ENCODE measurements at regions of chr11 and their contacts with region 1.

Region 1: GRCh38 chr11:65569973-65570918 is at the start of gene ZNRD2:
- DNase-seq: peak; percentile 99
- H3K4me3 ChIP-seq: peak within 1 kb of the TSS; percentile 60 to 97 (median 91)
- H3K27ac ChIP-seq: peak within 1 kb of the TSS; percentile 81
- H3K4me1 ChIP-seq: peaks cover 56% of the 10 kb centered on the region
- H3K27me3 ChIP-seq: no peaks in the 10 kb centered on the region
- CTCF ChIP-seq: peak; percentile 47 to 48
- total RNA-seq, gene ZNRD2: 35.2 to 52.8 TPM

Region 2: DNA sequence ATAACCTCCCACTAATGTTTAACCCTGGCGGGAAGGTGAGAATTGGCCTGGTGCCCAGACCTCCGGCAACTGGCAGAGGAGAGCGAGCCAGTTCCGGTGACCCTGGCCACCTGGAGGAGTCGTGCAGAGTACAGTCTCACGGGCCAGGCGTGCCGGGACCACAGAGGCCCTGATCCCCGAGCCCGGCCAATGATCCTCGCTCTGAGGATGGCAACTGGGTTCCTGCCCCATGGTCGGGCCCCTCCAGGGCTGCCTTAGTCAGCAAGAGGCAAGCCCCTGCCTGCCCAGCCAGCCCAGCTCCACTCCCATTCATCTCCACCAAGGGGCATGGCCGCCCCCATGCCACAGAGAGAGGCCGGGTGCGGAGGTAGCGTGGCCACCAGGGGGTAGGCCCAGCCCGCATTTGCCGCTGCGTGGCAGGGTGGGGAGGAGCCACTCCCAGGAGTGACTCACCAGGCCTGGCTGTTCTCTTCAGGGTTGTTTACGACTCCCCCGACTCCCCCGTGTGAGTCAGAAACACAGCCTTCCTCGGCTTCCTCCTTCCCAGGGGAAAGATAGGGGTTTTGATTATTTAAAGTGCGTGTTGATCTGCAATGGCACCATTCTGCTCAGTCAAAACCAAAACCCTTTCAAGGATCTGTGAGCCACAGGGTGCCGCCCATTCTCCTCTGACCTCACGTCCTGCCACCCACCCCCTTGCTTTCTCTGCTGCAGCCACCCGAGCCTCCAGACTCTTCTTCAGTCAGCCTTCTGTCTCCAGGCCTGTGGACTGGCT is 188.0 kb before region 1 on chr11 and contains the start of gene SLC25A45:
- CTCF ChIA-PET with region 1: no interaction called
- dilution Hi-C with region 1: no loop called
- in situ Hi-C with region 1: no loop called
- intact Hi-C with region 1: loop called (anchors 1 kb)
- DNase-seq: peak; percentile 100
- H3K4me3 ChIP-seq: peak within 1 kb of the TSS; percentile 17 to 31 (median 22)
- H3K27ac ChIP-seq: peak within 1 kb of the TSS; percentile 94
- H3K4me1 ChIP-seq: peaks cover 47% of the 10 kb centered on the region
- H3K27me3 ChIP-seq: no peaks in the 10 kb centered on the region
- CTCF ChIP-seq: peak; percentile 55 to 87
- total RNA-seq, gene SLC25A45: 0.50 to 2.4 TPM

Region 3: DNA sequence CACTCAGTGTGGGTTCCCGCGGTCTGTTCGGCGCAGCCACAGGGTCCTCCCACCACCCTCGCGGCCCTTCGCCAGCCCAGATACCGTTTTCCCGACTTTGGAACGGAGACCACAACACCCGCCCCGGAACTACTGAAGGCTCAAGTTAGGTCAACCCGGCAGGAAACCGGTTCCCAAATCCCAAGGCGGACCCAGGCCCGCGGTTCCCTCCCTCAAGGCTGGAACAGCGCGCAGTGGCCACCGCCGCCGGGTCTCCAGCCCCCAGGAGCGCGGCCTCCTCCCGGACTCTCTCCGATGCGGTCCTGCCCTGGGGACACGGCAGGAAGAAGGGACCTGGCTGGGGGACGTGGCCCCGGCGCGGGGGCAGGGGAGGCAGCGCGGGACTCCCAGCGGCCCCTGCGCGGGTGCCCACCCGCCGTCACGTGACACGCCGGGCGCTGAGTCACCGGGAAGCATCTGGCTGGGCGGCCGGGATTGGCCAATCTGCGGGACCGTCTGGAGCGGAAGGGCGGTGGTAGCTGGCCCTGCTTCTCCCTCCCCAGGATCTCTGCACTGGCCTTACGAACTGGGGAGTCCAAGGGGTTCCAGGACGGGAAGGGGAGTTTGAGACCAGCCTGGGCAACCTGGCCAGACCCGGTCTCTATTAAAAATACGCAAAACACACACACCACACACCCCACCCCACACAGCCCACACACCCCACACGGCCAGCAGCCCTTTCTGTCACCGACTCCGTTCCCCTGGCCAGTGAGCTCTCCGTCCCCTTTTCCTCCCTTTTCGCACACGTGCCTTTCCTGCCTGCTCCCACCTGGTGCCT is 92.9 kb before region 1 on chr11:
- CTCF ChIA-PET with region 1: no interaction called
- dilution Hi-C with region 1: no loop called
- in situ Hi-C with region 1: no loop called
- intact Hi-C with region 1: loop called (anchors 5 kb)
- DNase-seq: peak; percentile 95
- H3K4me3 ChIP-seq: peak overlapping the region; percentile 54 to 76 (median 62)
- H3K27ac ChIP-seq: peak overlapping the region; percentile 95
- H3K4me1 ChIP-seq: peaks cover 56% of the 10 kb centered on the region
- H3K27me3 ChIP-seq: no peaks in the 10 kb centered on the region
- CTCF ChIP-seq: peak in 1 of 2 donors; percentile 5

Region 4: GRCh38 chr11:65540297-65541092 is 29.8 kb before region 1 on chr11:
- CTCF ChIA-PET with region 1: interaction called, 20 read pairs
- dilution Hi-C with region 1: no loop called
- in situ Hi-C with region 1: no loop called
- intact Hi-C with region 1: loop called (anchors 1 kb)
- DNase-seq: peak; percentile 90
- H3K4me3 ChIP-seq: peak overlapping the region; percentile 53 to 55 (median 55)
- H3K27ac ChIP-seq: peak overlapping the region; percentile 44
- H3K4me1 ChIP-seq: peaks cover 27% of the 10 kb centered on the region
- H3K27me3 ChIP-seq: no peaks in the 10 kb centered on the region
- CTCF ChIP-seq: peak; percentile 43 to 95

Region 5: GRCh38 chr11:65662799-65663638 is 92.8 kb after region 1 on chr11 and contains the start of gene RELA:
- CTCF ChIA-PET with region 1: no interaction called
- dilution Hi-C with region 1: no loop called
- in situ Hi-C with region 1: no loop called
- intact Hi-C with region 1: loop called (anchors 5 kb)
- DNase-seq: peak; percentile 95
- H3K4me3 ChIP-seq: peak within 1 kb of the TSS; percentile 83 to 94 (median 86)
- H3K27ac ChIP-seq: peak within 1 kb of the TSS; percentile 82
- H3K4me1 ChIP-seq: peaks cover 17% of the 10 kb centered on the region
- H3K27me3 ChIP-seq: no peaks in the 10 kb centered on the region
- CTCF ChIP-seq: no peak
- total RNA-seq, gene RELA: 23.7 to 79.0 TPM